ENCODE measurements at regions of chr20 and their contacts with region 1.

Region 1: DNA sequence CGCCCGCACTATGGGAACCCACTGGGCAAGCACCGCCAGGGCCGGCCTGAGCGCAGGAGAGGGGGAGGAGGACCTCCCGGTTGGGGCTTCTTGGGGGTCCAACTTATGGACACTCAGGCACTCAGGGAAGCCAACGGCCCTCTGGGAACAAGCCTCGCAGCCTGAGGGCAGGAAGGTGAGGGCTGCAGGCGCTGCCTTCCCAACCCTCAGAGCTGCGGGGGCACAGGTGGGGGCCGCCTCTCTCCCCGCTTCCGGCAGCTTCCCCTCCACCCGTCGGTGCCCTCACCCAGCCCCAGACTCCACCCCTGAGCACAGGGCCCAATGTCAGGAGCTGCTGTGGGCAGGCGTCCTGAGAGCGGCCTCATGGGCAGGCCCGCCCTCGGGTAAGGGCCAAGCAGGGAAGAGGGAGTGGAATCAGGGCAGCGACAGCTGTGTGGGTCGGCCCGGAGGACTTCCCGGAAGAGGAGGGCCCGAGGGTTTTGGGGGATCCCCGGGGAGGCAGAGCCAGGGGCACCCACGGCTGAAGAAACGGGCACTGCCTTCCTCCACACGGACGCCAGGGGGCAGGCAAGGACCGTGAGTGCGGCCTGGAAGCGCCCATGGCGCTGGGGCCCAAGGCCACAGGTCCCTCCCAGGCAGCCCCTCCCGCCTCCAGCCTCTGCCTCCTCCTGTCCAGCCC is 488 bp upstream of the PTK6 start:
- DNase-seq: peak; percentile 92
- H3K4me3 ChIP-seq: peak overlapping the region; percentile 60
- H3K27ac ChIP-seq: peak overlapping the region; percentile 48
- H3K4me1 ChIP-seq: peaks cover 29% of the 10 kb centered on the region
- CTCF ChIP-seq: peak; percentile 86

Region 2: DNA sequence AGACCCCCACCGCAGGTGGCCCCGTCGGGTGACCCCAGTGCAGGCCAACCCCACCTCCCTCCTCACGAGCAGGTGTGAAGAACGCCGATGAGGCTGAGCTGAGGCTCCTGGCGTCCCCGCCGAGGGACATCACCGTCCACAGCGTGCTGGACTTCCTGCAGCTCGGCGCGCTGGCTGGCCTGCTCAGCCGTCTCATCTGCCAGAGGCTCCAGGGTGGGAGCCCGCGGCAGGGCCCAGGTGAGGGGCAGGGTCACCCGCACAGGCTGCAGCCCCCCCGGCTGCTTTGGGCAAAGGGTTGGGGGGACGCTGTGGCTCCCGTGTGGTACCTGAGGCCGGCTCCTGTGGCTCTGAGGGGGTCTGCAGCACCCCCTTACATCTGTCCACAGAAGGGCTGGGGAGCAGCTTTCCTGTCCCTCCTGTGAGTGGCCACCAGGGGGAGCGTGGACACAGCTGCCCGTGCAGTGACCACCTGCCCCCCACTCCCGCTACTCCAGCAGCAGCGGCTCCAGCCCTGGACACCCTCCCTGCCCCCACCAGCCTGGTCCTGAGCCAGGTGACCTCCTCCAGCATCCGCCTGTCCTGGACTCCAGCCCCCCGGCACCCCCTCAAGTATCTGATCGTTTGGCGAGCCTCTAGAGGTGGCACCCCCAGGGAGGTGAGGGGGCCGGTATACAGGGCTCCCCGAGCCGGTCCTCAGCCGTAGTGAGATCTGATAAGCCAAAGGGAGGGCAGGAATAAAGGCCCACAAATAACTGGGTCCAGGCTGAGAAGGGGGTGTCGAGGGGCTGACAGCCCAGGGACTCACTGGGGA is 228.2 kb before region 1 on chr20:
- CTCF ChIA-PET with region 1: no interaction called
- POLR2A ChIA-PET with region 1: no interaction called
- intact Hi-C with region 1: no loop called
- DNase-seq: peak; percentile 10
- H3K4me3 ChIP-seq: no peak overlapping the region
- H3K27ac ChIP-seq: no peak overlapping the region
- H3K4me1 ChIP-seq: no peaks in the 10 kb centered on the region
- CTCF ChIP-seq: peak; percentile 66

Region 3: DNA sequence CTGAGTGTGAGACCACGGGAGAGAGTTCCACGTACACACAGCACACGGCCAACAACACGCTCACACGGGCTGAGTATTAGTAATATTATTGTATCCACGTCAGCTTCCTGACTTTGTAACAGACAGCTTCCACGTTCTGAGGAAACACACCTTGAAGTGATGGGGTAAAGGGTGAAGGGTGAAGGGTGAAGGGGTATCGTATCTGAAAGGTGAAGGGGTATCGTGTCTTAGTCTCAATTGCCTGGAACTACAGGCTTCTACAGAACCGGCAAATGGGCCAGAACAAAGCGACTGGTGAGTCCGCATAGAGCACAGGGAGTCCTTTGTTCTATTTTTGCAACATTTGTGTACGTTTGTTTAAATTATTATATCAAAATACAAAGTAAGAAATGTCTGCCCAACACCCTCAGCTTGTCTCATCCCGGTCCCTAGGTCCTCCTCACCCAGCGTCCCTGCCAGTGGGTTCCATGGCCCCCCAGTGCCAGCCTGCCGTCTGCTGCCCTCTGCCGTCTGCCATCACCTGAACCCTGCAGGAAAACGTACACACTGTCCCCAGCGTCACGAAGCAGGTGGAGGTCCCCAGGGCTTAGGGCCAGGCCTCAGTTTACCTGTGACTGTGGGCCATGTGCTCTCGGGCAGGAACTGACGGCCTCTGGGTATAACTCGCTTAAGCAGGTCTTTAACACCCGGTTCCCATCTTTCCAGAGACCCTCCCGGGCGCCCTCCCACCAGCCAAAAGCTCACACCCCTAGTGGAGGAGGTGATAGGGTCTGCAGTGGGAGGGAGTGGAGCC is 40.8 kb after region 1 on chr20:
- CTCF ChIA-PET with region 1: interaction called, 3 read pairs
- POLR2A ChIA-PET with region 1: no interaction called
- intact Hi-C with region 1: loop called (anchors 1 kb)
- DNase-seq: peak; percentile 38
- H3K4me3 ChIP-seq: no peak overlapping the region
- H3K27ac ChIP-seq: no peak overlapping the region
- H3K4me1 ChIP-seq: peaks cover 6% of the 10 kb centered on the region
- CTCF ChIP-seq: peak; percentile 64

Region 4: DNA sequence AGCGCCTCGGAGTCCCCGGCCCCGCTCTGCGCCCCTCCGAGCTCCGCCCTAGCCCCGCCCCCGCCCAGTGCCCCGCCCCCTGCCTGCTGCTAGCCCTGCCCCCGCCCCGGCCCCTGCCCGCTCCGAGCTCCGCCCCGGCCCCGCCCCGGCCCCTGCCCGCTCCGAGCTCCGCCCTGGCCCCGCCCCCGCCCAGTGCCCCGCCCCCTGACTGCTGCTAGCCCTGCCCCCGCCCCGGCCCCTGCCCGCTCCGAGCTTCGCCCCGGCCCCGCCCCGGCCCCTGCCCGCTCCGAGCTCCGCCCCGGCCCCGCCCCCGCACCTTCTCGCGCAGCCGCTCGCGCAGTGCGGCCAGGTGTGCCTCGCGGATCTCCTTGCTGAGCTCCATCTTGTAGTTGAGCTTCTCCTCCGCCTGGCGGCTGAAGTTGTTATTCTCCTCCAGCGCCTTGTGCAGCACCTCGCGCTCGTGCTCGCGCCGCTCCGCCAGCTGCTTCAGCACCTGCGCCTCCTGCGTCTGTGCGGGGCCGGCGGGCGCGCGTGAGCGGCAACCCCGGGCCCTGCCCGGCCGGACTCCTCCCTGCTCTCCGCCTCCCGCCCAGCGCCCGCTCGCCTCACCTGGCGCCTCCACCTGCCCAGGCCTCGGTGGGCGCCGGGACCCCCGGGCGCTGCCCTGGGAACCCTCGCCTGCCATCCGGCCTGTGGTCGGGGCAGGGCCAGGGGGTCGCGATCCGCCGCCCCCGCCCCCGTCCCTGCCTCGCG is 104.3 kb after region 1 on chr20:
- CTCF ChIA-PET with region 1: interaction called, 12 read pairs
- POLR2A ChIA-PET with region 1: interaction called, 13 read pairs
- intact Hi-C with region 1: loop called (anchors 1 kb)
- DNase-seq: peak; percentile 97
- H3K4me3 ChIP-seq: peak overlapping the region; percentile 74
- H3K27ac ChIP-seq: peak overlapping the region; percentile 72
- H3K4me1 ChIP-seq: peaks cover 30% of the 10 kb centered on the region
- CTCF ChIP-seq: peak; percentile 58

Region 5: GRCh38 chr20:63664861-63665716 is 127.4 kb after region 1 on chr20:
- CTCF ChIA-PET with region 1: no interaction called
- POLR2A ChIA-PET with region 1: no interaction called
- intact Hi-C with region 1: no loop called
- DNase-seq: no peak
- H3K4me3 ChIP-seq: no peak overlapping the region
- H3K27ac ChIP-seq: no peak overlapping the region
- H3K4me1 ChIP-seq: no peaks in the 10 kb centered on the region
- CTCF ChIP-seq: no peak

Region 6: DNA sequence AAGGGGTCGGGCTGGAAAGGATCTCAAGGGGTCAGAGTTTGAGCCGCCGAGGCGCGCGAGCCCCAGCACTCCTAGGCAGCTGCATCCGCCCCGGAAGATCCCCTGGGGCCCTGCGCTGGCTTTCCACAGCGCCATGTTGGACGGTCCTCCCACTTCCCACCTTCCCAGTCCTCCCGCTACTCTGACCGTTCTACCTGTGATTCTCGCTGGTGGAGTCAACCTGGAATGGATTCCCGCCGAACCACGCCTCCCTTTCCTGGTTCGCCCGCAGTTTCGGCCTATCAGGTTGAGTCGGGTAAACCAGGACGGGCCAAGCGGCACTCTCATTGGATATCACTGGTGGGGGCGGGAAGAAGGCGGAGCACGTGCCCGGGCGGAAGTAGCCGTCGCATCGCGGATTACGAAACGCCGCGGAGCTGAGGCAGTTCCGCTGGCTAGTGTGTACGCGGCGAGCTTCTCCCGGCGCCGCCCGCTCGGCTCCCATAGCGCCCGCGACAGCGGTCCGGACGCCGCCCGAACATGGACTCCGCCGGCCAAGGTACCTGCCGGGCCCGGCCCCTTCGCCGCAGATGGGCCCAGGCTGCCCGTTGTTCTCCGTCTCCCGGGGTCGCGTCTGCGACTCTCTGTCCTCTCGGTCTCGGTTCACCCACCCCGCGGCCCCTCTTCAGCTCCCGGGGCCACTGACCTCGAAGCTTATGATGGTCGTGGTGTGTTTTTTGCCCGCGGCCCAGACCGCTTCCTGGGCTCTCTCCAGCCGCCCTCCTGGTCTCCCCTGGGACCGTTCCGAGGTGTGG is 327.4 kb after region 1 on chr20 and contains the start of gene TPD52L2:
- CTCF ChIA-PET with region 1: no interaction called
- POLR2A ChIA-PET with region 1: no interaction called
- intact Hi-C with region 1: loop called (anchors 10 kb)
- DNase-seq: peak; percentile 98
- H3K4me3 ChIP-seq: peak within 1 kb of the TSS; percentile 88
- H3K27ac ChIP-seq: peak within 1 kb of the TSS; percentile 71
- H3K4me1 ChIP-seq: peaks cover 9% of the 10 kb centered on the region
- CTCF ChIP-seq: no peak
- total RNA-seq, gene TPD52L2: 27.2 and 28.6 TPM in 2 replicates

Region 7: GRCh38 chr20:63973636-63974402 is 436.2 kb after region 1 on chr20:
- CTCF ChIA-PET with region 1: no interaction called
- POLR2A ChIA-PET with region 1: no interaction called
- intact Hi-C with region 1: loop called (anchors 2 kb)
- DNase-seq: peak; percentile 81
- H3K4me3 ChIP-seq: no peak overlapping the region
- H3K27ac ChIP-seq: no peak overlapping the region
- H3K4me1 ChIP-seq: peaks cover 32% of the 10 kb centered on the region
- CTCF ChIP-seq: peak; percentile 97